Calu3 (cell line): ENCODE measurements at regions of chr19 and their contacts with region 1.

Region 1: GRCh38 chr19:12867120-12868099 is 13.8 kb downstream of the DNASE2 start:
- DNase-seq: no peak
- H3K4me3 Mint-ChIP-seq: no peak overlapping the region
- H3K27ac Mint-ChIP-seq: no peak overlapping the region
- H3K4me1 Mint-ChIP-seq: peaks cover 7% of the 10 kb centered on the region
- H3K27me3 Mint-ChIP-seq: no peaks in the 10 kb centered on the region
- CTCF ChIP-seq: no peak

Region 2: DNA sequence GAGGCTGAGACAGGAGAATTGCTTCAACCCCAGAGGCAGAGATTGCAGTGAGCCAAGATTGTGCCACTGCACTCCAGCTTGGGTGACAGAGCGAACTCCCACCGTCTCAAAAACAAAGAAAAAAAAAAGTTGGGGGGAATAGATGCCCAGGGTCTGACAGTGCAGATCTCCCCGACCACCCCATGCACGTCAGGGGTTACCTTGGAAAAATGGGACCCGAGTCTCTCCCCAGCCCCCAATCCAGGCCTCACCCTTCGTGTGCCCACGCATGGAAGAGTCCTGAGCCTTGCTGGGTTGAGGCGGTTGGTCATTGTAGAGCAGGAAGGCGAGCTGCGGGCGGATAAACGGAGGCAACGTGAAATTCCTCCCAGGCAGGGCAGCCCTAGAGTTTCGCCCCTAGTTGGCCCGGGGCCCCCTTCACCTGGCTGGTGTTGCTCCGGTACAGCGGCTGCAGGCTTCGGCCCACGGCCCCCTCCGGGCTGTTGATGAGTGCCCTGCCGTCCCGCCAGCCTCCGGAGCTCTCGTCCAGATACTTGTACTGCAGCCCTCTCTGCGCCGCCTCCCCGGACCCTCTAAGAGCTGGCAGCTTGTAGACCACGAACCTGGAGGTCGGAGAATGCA is 13.3 kb after region 1 on chr19:
- CTCF ChIA-PET with region 1: interaction called, 11 read pairs
- intact Hi-C with region 1: no loop called
- DNase-seq: no peak
- H3K4me3 Mint-ChIP-seq: peak overlapping the region; percentile 73
- H3K27ac Mint-ChIP-seq: no peak overlapping the region
- H3K4me1 Mint-ChIP-seq: peaks cover 7% of the 10 kb centered on the region
- H3K27me3 Mint-ChIP-seq: peaks cover 2% of the 10 kb centered on the region
- CTCF ChIP-seq: no peak

Region 3: GRCh38 chr19:12913011-12913561 is 45.7 kb after region 1 on chr19:
- CTCF ChIA-PET with region 1: no interaction called
- intact Hi-C with region 1: no loop called
- DNase-seq: no peak
- H3K4me3 Mint-ChIP-seq: no peak overlapping the region
- H3K27ac Mint-ChIP-seq: no peak overlapping the region
- H3K4me1 Mint-ChIP-seq: no peaks in the 10 kb centered on the region
- H3K27me3 Mint-ChIP-seq: no peaks in the 10 kb centered on the region
- CTCF ChIP-seq: no peak